CD8-positive, alpha-beta T cell (primary cell): ENCODE measurements at regions of chr6 and their contacts with region 1.

Region 1: DNA sequence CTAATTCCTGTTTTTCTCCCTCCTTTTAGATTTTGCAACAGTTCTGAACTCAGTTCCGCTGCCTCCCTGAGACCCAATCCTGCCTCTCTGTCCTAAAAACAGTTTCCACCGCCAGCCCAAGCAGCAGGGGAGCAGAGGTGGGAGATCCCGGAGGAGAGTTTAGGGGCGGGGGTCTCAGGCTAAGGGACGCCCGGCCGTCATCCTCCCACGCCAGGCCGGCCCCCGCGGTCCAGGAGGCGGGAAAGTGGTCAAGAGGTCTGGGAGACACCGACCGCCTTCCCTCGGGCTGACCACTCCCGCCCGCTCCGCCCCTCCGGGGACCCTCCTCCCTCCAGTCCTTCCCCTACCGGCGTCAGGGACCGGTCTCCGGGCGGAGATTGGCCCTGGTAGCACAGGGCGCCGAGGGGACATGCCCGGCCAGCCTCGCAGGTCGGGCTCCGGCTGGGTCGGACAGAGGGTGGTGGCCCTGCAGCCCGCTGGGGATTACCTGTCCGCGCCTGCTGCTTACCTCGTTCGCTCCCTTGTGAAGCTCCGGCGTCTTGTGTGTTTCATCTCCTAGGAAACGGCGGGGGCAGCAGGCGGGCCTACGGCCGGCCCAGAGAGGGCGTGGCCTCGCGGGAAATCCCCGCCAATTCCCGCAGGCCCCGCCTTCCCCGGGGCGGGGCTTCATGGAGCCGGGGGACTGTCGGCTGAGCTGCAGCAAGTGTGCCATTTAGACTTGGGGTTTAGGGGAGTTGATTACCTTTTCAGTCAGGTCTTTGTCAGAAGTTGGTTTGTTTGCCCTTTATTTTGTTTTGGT is at the start of gene MAK:
- DNase-seq: peak; percentile 74 to 94 (median 83)
- ATAC-seq: peak; percentile 96
- H3K4me3 ChIP-seq: peak within 1 kb of the TSS; percentile 53 to 56
- H3K4me3 Mint-ChIP-seq: peak within 1 kb of the TSS; percentile 73
- H3K27ac ChIP-seq: peak within 1 kb of the TSS in 1 of 2 experiments; percentile 30
- H3K27ac Mint-ChIP-seq: no peak within 1 kb of the TSS
- H3K4me1 ChIP-seq: peaks cover 22% of the 10 kb centered on the region
- H3K4me1 Mint-ChIP-seq: peaks cover 20% of the 10 kb centered on the region
- H3K27me3 ChIP-seq: peaks cover 11 to 25% of the 10 kb centered on the region in 2 experiments
- H3K27me3 Mint-ChIP-seq: peaks cover 55% of the 10 kb centered on the region
- CTCF ChIP-seq: no peak
- total RNA-seq, gene MAK: 0.62 to 0.89 TPM

Region 2: DNA sequence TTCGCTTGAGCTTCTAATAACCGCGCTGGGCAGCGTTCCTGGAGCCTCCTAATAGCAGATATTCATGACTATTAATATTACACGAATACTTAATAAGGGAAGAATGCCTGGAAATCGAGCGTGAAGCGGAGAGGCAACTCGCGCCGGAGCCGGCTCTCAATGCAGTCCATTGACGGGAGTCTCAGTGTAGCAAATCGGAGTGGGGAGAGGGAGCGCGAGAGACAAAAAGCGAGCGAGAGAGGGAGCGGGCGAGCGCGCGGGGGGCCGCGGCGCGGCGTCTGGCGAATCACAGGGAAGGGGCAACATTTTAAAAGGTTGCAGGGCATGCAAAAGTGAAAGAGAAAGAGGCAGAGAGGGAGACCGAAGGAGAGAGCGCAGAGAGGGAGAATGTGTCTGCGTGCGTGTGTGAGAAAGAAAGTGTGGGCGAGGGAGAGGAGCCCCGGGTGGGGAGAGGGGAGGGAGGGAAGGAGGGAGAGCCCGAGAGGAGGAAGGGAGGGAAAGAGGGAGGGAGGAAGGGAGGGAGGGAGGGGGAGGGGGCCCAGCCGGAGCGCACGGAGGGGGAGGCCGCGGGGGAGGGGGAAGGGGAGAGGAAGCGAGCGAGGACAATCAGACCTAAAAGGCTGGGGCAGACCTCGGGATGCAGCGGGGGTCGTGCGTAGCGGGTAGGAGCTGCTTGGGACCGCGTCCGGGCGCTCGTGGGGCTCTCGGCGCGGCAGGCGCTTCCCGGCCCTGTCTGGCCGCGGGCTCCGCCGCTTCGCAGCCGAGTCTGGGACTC is 426.0 kb before region 1 on chr6:
- CTCF ChIA-PET with region 1: no interaction called
- POLR2A ChIA-PET with region 1: interaction called, 3 read pairs
- intact Hi-C with region 1: loop called in 1 of 2 experiments (anchors 5 kb)
- DNase-seq: peak in 4 of 9 experiments; percentile 29 to 65 (median 50)
- ATAC-seq: peak; percentile 75
- H3K4me3 ChIP-seq: peak overlapping the region; percentile 64 to 88
- H3K4me3 Mint-ChIP-seq: peak overlapping the region; percentile 88
- H3K27ac ChIP-seq: no peak overlapping the region
- H3K27ac Mint-ChIP-seq: peak overlapping the region; percentile 32
- H3K4me1 ChIP-seq: peaks cover 35% of the 10 kb centered on the region
- H3K4me1 Mint-ChIP-seq: peaks cover 41% of the 10 kb centered on the region
- H3K27me3 ChIP-seq: peaks cover 59 to 64% of the 10 kb centered on the region in 2 experiments
- H3K27me3 Mint-ChIP-seq: peaks cover 81% of the 10 kb centered on the region
- CTCF ChIP-seq: no peak

Region 3: GRCh38 chr6:10722820-10723566 is 115.2 kb before region 1 on chr6 and contains the start of gene TMEM14C:
- CTCF ChIA-PET with region 1: no interaction called
- POLR2A ChIA-PET with region 1: no interaction called
- intact Hi-C with region 1: loop called in 1 of 2 experiments (anchors 10 kb)
- DNase-seq: peak in 8 of 9 experiments; percentile 60 to 90 (median 82)
- ATAC-seq: peak; percentile 72
- H3K4me3 ChIP-seq: peak within 1 kb of the TSS; percentile 67 to 70
- H3K4me3 Mint-ChIP-seq: peak within 1 kb of the TSS; percentile 97
- H3K27ac ChIP-seq: peak within 1 kb of the TSS; percentile 49 to 65
- H3K27ac Mint-ChIP-seq: peak within 1 kb of the TSS; percentile 98
- H3K4me1 ChIP-seq: peaks cover 30% of the 10 kb centered on the region
- H3K4me1 Mint-ChIP-seq: peaks cover 64% of the 10 kb centered on the region
- H3K27me3 ChIP-seq: no peaks in the 10 kb centered on the region
- H3K27me3 Mint-ChIP-seq: no peaks in the 10 kb centered on the region
- CTCF ChIP-seq: no peak
- total RNA-seq, gene TMEM14C: 7.5 to 8.5 TPM